ENCODE measurements at regions of chr9 and their contacts with region 1.

Region 1: DNA sequence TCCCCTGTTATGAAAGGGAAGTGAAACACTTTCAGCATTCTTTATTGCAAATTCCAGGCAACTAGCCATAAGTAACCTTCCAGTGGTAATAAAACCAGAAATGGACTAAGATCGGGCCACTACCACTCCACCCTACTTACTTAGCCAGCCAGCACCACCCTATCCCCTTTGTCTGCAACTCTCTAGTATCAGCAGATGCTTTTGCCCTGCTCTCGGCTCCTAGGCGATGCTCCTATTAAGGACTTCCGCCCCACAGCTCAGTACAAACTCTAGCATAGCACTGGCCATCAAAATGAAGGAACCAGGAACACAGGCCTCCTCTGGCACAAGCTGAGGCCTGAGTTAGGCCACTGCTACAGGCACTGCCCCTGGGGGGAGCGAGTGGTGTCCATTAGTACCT is 81.2 kb downstream of the GLDC start:
- DNase-seq: no peak
- H3K4me3 ChIP-seq: no peak overlapping the region
- H3K27ac ChIP-seq: no peak overlapping the region
- H3K4me1 ChIP-seq: peaks cover 0 to 4% of the 10 kb centered on the region in 2 donors
- H3K27me3 ChIP-seq: no peaks in the 10 kb centered on the region
- CTCF ChIP-seq: no peak
- POLR2A ChIP-seq: no peak

Region 2: DNA sequence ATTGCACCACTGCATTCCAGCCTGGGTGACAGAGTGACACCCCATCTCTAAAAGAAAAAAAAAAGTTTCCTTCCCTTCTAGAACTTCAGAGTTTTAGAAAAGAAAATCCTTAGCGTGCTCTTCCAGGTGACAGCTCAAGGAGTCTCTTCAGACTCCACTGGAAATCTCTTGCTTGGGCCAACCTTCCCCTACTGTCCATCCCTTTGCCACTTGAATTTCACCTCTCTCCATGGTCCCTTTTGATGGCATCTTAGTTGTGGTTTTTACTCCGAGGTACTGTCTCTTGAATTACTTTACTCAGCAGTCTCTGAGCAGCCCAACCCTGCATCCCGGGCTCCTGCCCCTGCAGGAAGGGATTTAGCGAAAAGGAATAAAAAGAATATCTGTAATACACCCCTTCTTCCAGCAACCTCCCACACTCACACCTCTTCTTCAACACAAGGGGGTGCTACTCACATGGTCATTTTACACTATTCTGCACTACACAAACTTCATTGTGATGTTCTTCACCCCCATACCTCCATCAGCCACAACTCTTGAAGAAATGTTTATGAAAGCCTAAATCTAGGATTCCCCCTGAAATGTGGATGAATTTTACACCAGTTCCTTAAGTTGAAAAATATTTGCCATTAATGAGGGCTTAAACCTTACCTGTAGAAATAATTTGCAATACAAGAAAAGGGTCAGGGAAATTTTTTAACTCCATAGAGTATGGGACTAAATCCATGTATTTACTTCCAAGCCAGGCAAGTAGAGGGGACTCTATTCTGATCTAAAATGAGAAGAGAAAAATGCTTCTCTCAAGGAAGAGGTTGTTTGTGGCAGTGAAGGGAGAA is 210.3 kb before region 1 on chr9:
- intact Hi-C with region 1: loop called (anchors 5 kb)
- DNase-seq: no peak
- H3K4me3 ChIP-seq: no peak overlapping the region
- H3K27ac ChIP-seq: no peak overlapping the region
- H3K4me1 ChIP-seq: no peaks in the 10 kb centered on the region
- H3K27me3 ChIP-seq: no peaks in the 10 kb centered on the region
- CTCF ChIP-seq: peak; percentile 43 to 75 (median 62)
- POLR2A ChIP-seq: no peak

Region 3: DNA sequence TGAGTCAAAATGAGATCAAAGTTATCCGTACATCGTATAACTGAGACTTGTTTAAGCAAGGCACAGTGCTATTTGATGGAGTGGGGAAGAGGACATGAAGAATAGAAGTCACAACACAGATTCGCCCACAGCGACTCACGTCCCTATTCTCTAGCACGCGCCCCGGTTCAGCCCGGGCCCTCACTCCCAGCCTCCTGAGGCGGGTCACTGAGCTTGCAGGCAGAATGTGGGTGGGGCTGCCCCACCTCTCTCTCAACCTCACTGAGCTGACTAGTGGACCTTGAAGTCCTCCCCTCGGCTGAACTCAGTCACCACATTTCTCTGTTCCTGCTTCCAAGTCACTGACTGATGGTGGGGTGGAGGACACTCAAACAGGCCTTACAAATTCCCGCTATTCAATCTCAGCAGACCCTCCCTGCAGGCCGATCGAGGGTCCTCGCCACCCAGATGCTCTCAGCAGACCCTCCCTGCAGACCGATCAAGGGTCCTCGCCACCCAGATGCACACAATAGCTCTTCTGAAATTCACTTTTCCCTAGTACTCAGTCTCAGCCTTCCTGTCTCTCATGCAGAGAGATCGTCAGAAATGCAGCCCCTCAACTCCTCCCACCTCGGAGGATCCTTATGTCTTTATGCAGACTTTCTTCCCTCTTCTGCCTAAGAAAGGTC is 68.3 kb after region 1 on chr9:
- intact Hi-C with region 1: no loop called
- DNase-seq: peak; percentile 87 to 88
- H3K4me3 ChIP-seq: no peak overlapping the region
- H3K27ac ChIP-seq: peak overlapping the region in 2 of 3 donors; percentile 32 to 64
- H3K4me1 ChIP-seq: peaks cover 5 to 7% of the 10 kb centered on the region in 2 donors
- H3K27me3 ChIP-seq: no peaks in the 10 kb centered on the region
- CTCF ChIP-seq: no peak
- POLR2A ChIP-seq: peak in 1 of 2 donors; percentile 38

Region 4: DNA sequence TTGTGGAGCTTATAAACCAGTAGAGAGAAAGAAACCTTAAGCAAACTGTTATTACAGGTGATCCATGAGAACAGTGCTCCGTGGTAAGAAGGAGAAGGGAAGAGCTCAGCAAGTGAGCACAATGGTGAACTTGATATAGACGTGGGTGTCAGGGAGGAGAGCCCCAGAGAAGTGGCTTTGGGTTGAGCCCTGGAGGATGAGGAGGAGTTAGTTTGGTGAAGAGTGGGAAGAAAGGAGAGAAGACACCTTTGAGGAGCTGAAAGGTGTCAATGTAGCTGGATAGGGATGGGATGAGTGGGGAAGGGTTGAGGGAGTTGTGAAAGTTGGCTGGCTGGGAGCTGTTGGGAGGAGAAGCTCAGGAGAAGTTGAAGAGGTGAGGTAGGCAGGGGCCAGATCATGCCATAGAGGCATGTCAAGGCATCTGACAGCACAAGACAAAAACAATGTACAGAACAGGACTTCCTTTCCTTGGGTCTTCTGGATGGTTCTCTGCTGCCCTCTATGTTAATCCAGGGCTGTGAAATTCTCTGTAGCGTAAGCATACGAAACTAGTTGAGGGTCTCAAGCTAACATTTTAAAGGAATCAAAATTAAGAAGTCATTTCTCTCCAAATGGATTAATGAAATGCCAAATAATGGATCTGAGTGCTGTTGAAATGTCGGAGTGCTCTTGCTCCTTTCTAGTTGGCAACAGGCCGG is 695.3 kb after region 1 on chr9:
- intact Hi-C with region 1: no loop called
- DNase-seq: no peak
- H3K4me3 ChIP-seq: no peak overlapping the region
- H3K27ac ChIP-seq: no peak overlapping the region
- H3K4me1 ChIP-seq: no peaks in the 10 kb centered on the region
- H3K27me3 ChIP-seq: no peaks in the 10 kb centered on the region
- CTCF ChIP-seq: no peak
- POLR2A ChIP-seq: no peak